AG04450 (cell line): ENCODE measurements at regions of chr12 and their contacts with region 1.

Region 1: DNA sequence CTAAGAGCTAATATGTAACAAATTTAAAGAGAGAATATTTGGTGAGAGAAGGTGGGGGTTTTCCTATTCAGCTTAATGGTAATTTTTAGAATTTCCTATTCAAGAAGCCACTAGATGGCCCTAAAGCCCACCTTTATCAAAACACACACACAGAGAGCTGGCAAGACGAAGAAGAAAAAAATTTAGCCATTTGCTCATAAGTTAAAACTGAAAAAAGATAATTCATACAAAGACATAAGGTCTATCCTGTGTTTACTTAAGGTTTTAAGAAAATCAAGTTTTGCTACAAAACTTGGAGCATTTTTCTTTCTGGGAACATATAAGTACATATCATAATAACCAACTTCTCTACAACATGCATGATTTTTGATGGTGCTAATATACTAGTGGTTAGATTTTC is 46.8 kb upstream of the PCED1B start:
- DNase-seq: no peak
- H3K4me3 ChIP-seq: no peak overlapping the region
- H3K27ac ChIP-seq: no peak overlapping the region
- H3K27me3 ChIP-seq: no peaks in the 10 kb centered on the region
- CTCF ChIP-seq: peak; percentile 65

Region 2: GRCh38 chr12:47021298-47021697 is 11.3 kb before region 1 on chr12:
- CTCF ChIA-PET with region 1: interaction called, 34 read pairs
- POLR2A ChIA-PET with region 1: no interaction called
- DNase-seq: peak; percentile 68
- H3K4me3 ChIP-seq: no peak overlapping the region
- H3K27ac ChIP-seq: no peak overlapping the region
- H3K27me3 ChIP-seq: no peaks in the 10 kb centered on the region
- CTCF ChIP-seq: peak; percentile 66

Region 3: GRCh38 chr12:47307680-47308399 is 275.2 kb after region 1 on chr12:
- CTCF ChIA-PET with region 1: interaction called, 76 read pairs
- POLR2A ChIA-PET with region 1: no interaction called
- DNase-seq: peak; percentile 23
- H3K4me3 ChIP-seq: no peak overlapping the region
- H3K27ac ChIP-seq: no peak overlapping the region
- H3K27me3 ChIP-seq: no peaks in the 10 kb centered on the region
- CTCF ChIP-seq: peak; percentile 77

Region 4: GRCh38 chr12:47547085-47547484 is 514.4 kb after region 1 on chr12:
- CTCF ChIA-PET with region 1: interaction called, 10 read pairs
- POLR2A ChIA-PET with region 1: no interaction called
- DNase-seq: peak; percentile 23
- H3K4me3 ChIP-seq: no peak overlapping the region
- H3K27ac ChIP-seq: no peak overlapping the region
- H3K27me3 ChIP-seq: peaks cover 8% of the 10 kb centered on the region
- CTCF ChIP-seq: peak; percentile 67

Region 5: GRCh38 chr12:47686645-47687240 is 654.1 kb after region 1 on chr12:
- CTCF ChIA-PET with region 1: interaction called, 70 read pairs
- POLR2A ChIA-PET with region 1: no interaction called
- DNase-seq: peak; percentile 26
- H3K4me3 ChIP-seq: no peak overlapping the region
- H3K27ac ChIP-seq: no peak overlapping the region
- H3K27me3 ChIP-seq: no peaks in the 10 kb centered on the region
- CTCF ChIP-seq: peak; percentile 84